GM12878 (cell line): ENCODE measurements at regions of chr18 and their contacts with region 1.

Region 1: DNA sequence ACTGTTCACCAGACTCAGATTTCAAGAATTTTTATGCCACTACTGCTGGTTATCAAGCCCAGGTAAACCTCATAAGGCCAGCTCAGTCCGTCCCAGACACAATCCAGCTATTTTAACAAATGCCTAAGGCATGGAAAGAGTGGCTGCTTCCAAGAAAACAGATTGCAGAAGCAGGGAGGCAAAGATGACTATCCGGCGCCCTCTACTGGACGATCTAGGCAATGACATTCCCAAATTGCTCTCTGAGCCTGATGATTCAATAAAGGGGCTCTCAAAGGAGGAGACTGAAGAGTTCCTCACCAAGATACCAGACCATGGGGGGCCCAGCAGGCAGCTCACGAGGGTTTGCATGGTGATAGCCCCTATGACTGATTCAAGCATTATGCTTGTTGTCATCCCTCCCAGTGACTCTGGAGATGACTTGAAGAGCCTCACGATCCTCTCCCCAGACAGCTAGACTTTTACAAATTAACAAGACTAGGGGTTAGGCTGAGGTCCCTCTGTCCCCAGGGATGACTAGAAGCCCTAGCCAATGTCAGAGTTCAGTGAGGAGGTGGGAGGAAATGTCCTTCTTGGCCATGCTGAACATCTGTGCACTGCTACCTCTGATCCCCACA is 25.0 kb downstream of the SERPINB8 start:
- DNase-seq: no peak
- ATAC-seq: peak; percentile 73
- H3K4me3 ChIP-seq: no peak overlapping the region
- H3K27ac ChIP-seq: no peak overlapping the region
- H3K4me1 ChIP-seq: no peaks in the 10 kb centered on the region
- H3K27me3 ChIP-seq: no peaks in the 10 kb centered on the region
- CTCF ChIP-seq: peak; percentile 59 to 93 (median 89)
- EP300 ChIP-seq: no peak
- POLR2A ChIP-seq: no peak
- RAD21 ChIP-seq: peak; percentile 58

Region 2: GRCh38 chr18:63322841-63323634 is 671.9 kb before region 1 on chr18:
- CTCF ChIA-PET with region 1: no interaction called
- POLR2A ChIA-PET with region 1: no interaction called
- RAD21 ChIA-PET with region 1: no interaction called
- SMC1A ChIA-PET with region 1: no interaction called
- in situ Hi-C with region 1: no loop called
- intact Hi-C with region 1: no loop called
- DNase-seq: no peak
- ATAC-seq: peak; percentile 26
- H3K4me3 ChIP-seq: no peak overlapping the region
- H3K27ac ChIP-seq: peak overlapping the region; percentile 75
- H3K4me1 ChIP-seq: peaks cover 20% of the 10 kb centered on the region
- H3K27me3 ChIP-seq: no peaks in the 10 kb centered on the region
- CTCF ChIP-seq: peak; percentile 65 to 80 (median 70)
- EP300 ChIP-seq: no peak
- POLR2A ChIP-seq: no peak
- RAD21 ChIP-seq: peak; percentile 90

Region 3: DNA sequence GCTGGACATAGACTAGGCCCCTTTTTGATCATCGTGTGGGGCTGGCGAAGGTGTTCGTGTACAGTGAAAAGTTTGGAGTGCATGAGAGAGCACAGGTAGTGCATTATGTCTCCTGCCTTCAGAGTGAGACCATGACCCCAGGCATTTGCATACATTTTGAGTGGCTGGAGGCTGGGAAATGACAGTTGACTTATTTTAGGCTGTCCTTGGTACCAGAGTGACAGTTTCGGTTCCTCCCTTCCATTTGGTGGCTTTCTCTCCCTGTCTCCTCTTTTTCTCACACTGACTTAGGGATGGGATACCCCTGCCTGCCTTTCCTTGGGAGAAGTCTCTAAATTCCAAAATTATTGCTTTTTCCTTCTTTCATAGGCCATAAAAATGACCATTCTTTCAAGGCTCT is 432.6 kb before region 1 on chr18:
- CTCF ChIA-PET with region 1: no interaction called
- POLR2A ChIA-PET with region 1: no interaction called
- RAD21 ChIA-PET with region 1: no interaction called
- SMC1A ChIA-PET with region 1: no interaction called
- in situ Hi-C with region 1: no loop called
- intact Hi-C with region 1: no loop called
- DNase-seq: peak; percentile 17
- ATAC-seq: peak; percentile 71
- H3K4me3 ChIP-seq: no peak overlapping the region
- H3K27ac ChIP-seq: no peak overlapping the region
- H3K4me1 ChIP-seq: peaks cover 10% of the 10 kb centered on the region
- H3K27me3 ChIP-seq: no peaks in the 10 kb centered on the region
- CTCF ChIP-seq: no peak
- EP300 ChIP-seq: no peak; a peak in 1 of 4 replicates
- POLR2A ChIP-seq: no peak
- RAD21 ChIP-seq: no peak

Region 4: DNA sequence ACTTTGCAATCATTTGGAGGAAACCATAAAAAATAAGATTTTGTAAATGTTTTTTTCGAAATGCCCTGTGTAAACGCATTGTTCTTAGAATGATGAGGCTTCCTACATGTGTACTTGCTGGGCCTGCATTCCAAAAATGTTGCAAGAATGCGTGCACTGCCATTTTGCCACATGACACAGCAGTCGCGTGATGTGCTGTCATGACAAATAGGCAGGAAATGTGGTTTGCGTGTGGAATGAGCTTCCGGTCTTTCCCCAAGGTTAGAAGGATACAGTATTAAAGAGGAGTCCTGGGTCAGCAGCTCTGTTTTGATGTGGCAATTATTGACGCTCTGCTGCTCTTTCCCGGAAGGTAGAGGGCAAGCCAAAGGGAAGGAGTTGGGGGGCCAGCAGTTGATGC is 125.5 kb before region 1 on chr18:
- CTCF ChIA-PET with region 1: no interaction called
- POLR2A ChIA-PET with region 1: no interaction called
- RAD21 ChIA-PET with region 1: no interaction called
- SMC1A ChIA-PET with region 1: no interaction called
- in situ Hi-C with region 1: no loop called
- intact Hi-C with region 1: no loop called
- DNase-seq: no peak
- ATAC-seq: no peak
- H3K4me3 ChIP-seq: no peak overlapping the region
- H3K27ac ChIP-seq: no peak overlapping the region
- H3K4me1 ChIP-seq: no peaks in the 10 kb centered on the region
- H3K27me3 ChIP-seq: no peaks in the 10 kb centered on the region
- CTCF ChIP-seq: no peak
- EP300 ChIP-seq: no peak
- POLR2A ChIP-seq: no peak
- RAD21 ChIP-seq: no peak

Region 5: DNA sequence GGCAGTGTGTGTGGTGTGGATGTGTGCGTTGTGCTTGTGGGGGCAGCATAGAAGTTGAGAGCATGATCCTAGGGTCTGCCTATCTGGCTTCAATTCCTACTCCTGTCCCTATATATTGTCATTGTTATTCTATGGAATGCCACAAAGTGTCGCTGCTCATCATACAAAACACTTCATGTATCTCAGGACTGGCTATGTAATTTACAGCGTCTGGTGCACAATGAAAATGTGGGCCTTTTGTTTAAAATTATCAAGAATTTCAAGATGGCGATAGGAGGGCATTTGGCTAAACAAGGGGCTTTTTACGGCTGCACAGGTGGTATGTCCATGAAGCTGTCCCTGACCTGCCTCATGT is 104.0 kb before region 1 on chr18:
- CTCF ChIA-PET with region 1: interaction called, 5 read pairs
- POLR2A ChIA-PET with region 1: no interaction called
- RAD21 ChIA-PET with region 1: interaction called, 3 read pairs
- SMC1A ChIA-PET with region 1: no interaction called
- in situ Hi-C with region 1: no loop called
- intact Hi-C with region 1: loop called (anchors 5 kb)
- DNase-seq: no peak
- ATAC-seq: peak; percentile 80
- H3K4me3 ChIP-seq: no peak overlapping the region
- H3K27ac ChIP-seq: no peak overlapping the region
- H3K4me1 ChIP-seq: no peaks in the 10 kb centered on the region
- H3K27me3 ChIP-seq: no peaks in the 10 kb centered on the region
- CTCF ChIP-seq: peak; percentile 39 to 74 (median 50); a peak in 4 of 6 replicates
- EP300 ChIP-seq: no peak
- POLR2A ChIP-seq: no peak
- RAD21 ChIP-seq: peak; percentile 95

Region 6: GRCh38 chr18:63963615-63964256 is 31.2 kb before region 1 on chr18:
- CTCF ChIA-PET with region 1: interaction called, 12 read pairs
- POLR2A ChIA-PET with region 1: no interaction called
- RAD21 ChIA-PET with region 1: interaction called, 3 read pairs
- SMC1A ChIA-PET with region 1: no interaction called
- in situ Hi-C with region 1: no loop called
- intact Hi-C with region 1: no loop called
- DNase-seq: no peak
- ATAC-seq: peak; percentile 83
- H3K4me3 ChIP-seq: no peak overlapping the region
- H3K27ac ChIP-seq: no peak overlapping the region
- H3K4me1 ChIP-seq: no peaks in the 10 kb centered on the region
- H3K27me3 ChIP-seq: no peaks in the 10 kb centered on the region
- CTCF ChIP-seq: peak; percentile 71 to 92 (median 86)
- EP300 ChIP-seq: no peak
- POLR2A ChIP-seq: no peak
- RAD21 ChIP-seq: peak; percentile 57

Region 7: DNA sequence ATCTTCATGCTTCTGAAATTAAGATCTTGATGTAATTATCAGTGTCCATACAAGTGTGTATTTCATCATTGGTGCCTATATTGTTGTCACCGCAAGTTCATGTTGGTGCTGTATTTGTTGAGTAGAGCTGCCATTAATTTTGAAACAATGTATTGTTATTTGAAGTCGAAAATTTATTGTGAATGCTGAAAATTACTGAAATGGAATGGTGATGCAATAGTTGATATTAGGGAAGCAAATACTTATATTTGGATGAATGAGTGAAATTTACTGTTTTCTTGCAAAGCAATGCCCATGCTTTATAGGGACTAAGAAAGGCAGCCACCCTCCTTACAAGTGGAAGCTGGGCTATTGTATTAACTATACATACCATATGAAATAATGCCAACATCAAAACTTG is 16.6 kb after region 1 on chr18:
- CTCF ChIA-PET with region 1: interaction called, 10 read pairs
- POLR2A ChIA-PET with region 1: interaction called, 5 read pairs
- RAD21 ChIA-PET with region 1: interaction called, 3 read pairs
- SMC1A ChIA-PET with region 1: interaction called, 4 read pairs
- in situ Hi-C with region 1: no loop called
- intact Hi-C with region 1: no loop called
- DNase-seq: no peak
- ATAC-seq: no peak
- H3K4me3 ChIP-seq: no peak overlapping the region
- H3K27ac ChIP-seq: no peak overlapping the region
- H3K4me1 ChIP-seq: no peaks in the 10 kb centered on the region
- H3K27me3 ChIP-seq: no peaks in the 10 kb centered on the region; a peak in 1 of 4 replicates
- CTCF ChIP-seq: no peak
- EP300 ChIP-seq: no peak
- POLR2A ChIP-seq: no peak
- RAD21 ChIP-seq: no peak

Region 8: DNA sequence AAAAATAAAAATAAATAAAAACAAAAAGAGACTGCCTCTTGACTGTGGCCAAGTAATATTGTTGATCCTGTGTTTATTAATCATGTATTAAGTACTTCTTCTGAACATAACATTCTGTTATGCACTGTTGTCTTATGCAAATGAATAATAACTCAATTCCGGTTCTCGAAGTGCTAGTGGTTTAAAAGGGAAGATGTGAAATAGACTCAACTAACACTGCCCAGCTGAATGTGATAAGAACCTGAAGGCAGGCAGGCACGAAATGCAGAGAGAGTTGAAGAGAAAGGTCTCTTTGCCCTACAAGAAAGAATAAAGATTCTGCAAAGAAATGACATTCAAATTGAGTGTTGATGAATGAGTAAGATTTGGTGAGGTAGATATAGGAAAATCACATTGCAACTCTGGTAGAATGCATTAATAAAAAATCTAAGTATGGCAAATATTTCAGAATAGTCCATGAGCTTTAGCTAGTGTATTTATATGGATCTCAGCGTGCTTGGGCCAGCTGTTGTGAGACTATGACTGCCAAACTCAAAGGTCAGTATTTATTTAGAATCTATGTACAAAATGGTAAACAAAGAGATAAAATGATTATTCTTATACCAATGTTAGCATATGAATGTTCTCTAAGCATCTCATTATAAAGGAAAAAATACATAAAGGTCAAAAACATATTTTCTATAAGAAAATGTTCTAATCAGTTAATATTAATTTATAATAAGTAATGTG is 1403.6 kb after region 1 on chr18:
- CTCF ChIA-PET with region 1: no interaction called
- POLR2A ChIA-PET with region 1: no interaction called
- RAD21 ChIA-PET with region 1: no interaction called
- SMC1A ChIA-PET with region 1: no interaction called
- in situ Hi-C with region 1: no loop called
- intact Hi-C with region 1: no loop called
- DNase-seq: no peak
- ATAC-seq: no peak
- H3K4me3 ChIP-seq: no peak overlapping the region
- H3K27ac ChIP-seq: no peak overlapping the region
- H3K4me1 ChIP-seq: no peaks in the 10 kb centered on the region
- H3K27me3 ChIP-seq: no peaks in the 10 kb centered on the region
- CTCF ChIP-seq: no peak
- EP300 ChIP-seq: no peak
- POLR2A ChIP-seq: no peak
- RAD21 ChIP-seq: no peak